Ascending aorta (tissue), 2 donors: ENCODE measurements at regions of chr5 and their contacts with region 1.

Region 1: GRCh38 chr5:142012792-142013388 is at the start of gene GNPDA1:
- DNase-seq: peak; percentile 51 to 92
- H3K4me3 ChIP-seq: peak within 1 kb of the TSS; percentile 68 to 92
- H3K27ac ChIP-seq: peak within 1 kb of the TSS; percentile 83 to 84
- H3K4me1 ChIP-seq: peaks cover 2 to 16% of the 10 kb centered on the region in 2 donors
- H3K27me3 ChIP-seq: no peaks in the 10 kb centered on the region
- CTCF ChIP-seq: peak in 1 of 3 experiments; percentile 52
- total RNA-seq, gene GNPDA1: 185 TPM

Region 2: GRCh38 chr5:141992349-141992963 is 20.4 kb before region 1 on chr5:
- intact Hi-C with region 1: loop called (anchors 1 kb)
- DNase-seq: peak in 1 of 2 donors; percentile 83
- H3K4me3 ChIP-seq: no peak overlapping the region
- H3K27ac ChIP-seq: no peak overlapping the region
- H3K4me1 ChIP-seq: no peaks in the 10 kb centered on the region
- H3K27me3 ChIP-seq: no peaks in the 10 kb centered on the region
- CTCF ChIP-seq: peak; percentile 54 to 80 (median 72)

Region 3: DNA sequence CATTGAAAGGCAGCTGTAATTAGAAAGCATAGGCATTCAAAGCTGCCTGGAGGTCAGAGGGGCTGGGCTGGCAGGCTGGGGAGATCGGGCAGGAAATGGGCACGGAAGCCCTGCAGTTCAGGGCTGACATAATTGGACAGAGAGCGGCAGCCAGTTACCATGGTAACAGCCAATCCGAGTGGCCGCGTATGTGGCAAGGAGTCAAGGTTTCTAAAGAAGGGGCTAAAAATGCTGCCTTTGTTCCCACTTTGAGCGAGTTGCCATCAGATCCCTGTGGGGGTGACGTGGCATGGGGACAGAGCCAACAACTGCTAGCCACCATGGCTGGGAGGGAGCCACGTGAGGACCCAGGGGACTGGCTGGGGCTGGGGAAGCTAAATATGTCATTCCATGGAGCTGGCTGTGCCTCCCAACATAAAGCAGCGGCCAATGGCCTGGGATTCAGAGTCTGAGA is 51.0 kb after region 1 on chr5:
- intact Hi-C with region 1: loop called (anchors 2 kb)
- DNase-seq: peak; percentile 91 to 98
- H3K4me3 ChIP-seq: no peak overlapping the region
- H3K27ac ChIP-seq: peak overlapping the region; percentile 74 to 88
- H3K4me1 ChIP-seq: peaks cover 8 to 28% of the 10 kb centered on the region in 2 donors
- H3K27me3 ChIP-seq: no peaks in the 10 kb centered on the region
- CTCF ChIP-seq: no peak

Region 4: GRCh38 chr5:142108432-142109330 is 95.8 kb after region 1 on chr5 and contains the start of gene NDFIP1:
- intact Hi-C with region 1: loop called (anchors 2 kb)
- DNase-seq: peak; percentile 47 to 90
- H3K4me3 ChIP-seq: peak within 1 kb of the TSS; percentile 85 to 93
- H3K27ac ChIP-seq: peak within 1 kb of the TSS; percentile 98 to 100
- H3K4me1 ChIP-seq: peaks cover 11 to 36% of the 10 kb centered on the region in 2 donors
- H3K27me3 ChIP-seq: no peaks in the 10 kb centered on the region
- CTCF ChIP-seq: peak in 2 of 3 experiments; percentile 15 to 25
- total RNA-seq, gene NDFIP1: 310 TPM

Region 5: DNA sequence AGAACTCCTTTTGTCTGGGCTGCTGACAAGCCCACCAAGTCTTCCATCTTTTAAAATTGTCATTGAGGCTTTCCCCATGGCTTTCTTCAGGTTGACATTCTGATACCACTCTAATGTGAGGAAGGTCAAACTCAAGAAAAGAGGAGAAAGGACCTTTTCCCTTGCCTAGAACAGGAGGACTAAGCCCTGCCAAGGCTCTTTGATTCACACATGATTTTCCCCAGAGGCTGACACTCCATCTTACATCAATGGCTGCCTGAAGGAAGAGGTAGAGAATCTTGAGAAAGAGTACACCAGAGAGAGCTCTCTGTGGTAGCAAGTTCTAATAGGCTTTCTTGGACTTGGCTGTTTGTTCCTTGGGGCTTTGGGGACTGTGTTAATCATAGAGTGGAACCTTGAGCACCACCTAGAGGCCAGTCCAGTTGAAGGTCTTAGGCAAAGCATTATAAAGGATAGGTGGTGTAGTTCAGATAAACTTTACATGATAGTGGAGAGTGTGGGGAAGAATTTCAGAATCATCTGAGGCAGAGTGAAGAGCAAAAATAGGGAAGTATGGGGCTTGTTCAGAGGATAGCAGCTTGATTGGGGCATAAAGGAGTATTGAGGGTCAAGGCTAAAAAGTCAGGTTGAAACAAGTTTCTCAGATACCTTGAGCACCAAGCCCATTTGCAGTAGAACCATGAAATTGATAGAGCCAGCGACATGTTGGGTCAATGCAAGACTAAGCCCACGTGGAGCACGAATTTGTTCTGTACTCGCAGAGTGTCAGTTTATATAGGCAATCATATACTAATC is 132.4 kb after region 1 on chr5:
- intact Hi-C with region 1: loop called (anchors 1 kb)
- DNase-seq: peak in 1 of 2 donors; percentile 77
- H3K4me3 ChIP-seq: no peak overlapping the region
- H3K27ac ChIP-seq: no peak overlapping the region
- H3K4me1 ChIP-seq: peaks cover 0 to 3% of the 10 kb centered on the region in 2 donors
- H3K27me3 ChIP-seq: no peaks in the 10 kb centered on the region
- CTCF ChIP-seq: peak; percentile 44 to 74 (median 59)

Region 6: DNA sequence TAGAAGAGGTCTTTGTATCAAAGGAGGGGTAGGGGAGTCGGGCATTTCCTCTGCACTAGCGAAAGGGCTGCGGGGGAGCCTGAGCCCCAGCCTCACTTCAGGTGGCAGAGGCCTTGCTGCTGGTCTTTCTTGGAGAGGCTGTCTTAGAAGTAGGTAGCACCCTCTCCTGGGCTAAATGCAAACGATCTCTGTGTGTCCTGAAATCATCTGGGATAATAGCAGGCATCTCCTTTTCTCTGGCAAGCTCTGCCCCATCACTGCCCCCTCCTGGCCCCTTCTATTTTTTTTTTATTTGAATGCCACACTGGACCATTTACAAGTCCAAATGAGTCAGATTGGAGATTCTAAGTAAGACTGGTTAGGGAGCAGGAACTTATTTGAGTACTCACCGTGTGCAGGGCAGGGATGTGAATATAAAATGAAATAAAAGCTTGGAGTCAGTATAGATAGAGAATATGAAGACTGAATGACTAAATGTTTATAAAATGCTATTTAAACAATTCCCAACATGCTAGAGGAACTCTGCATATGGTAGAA is 535.9 kb after region 1 on chr5:
- intact Hi-C with region 1: loop called (anchors 10 kb)
- DNase-seq: peak in 1 of 2 donors; percentile 79
- H3K4me3 ChIP-seq: no peak overlapping the region
- H3K27ac ChIP-seq: no peak overlapping the region
- H3K4me1 ChIP-seq: peaks cover 0 to 5% of the 10 kb centered on the region in 2 donors
- H3K27me3 ChIP-seq: no peaks in the 10 kb centered on the region
- CTCF ChIP-seq: peak; percentile 47 to 72 (median 68)

Region 7: DNA sequence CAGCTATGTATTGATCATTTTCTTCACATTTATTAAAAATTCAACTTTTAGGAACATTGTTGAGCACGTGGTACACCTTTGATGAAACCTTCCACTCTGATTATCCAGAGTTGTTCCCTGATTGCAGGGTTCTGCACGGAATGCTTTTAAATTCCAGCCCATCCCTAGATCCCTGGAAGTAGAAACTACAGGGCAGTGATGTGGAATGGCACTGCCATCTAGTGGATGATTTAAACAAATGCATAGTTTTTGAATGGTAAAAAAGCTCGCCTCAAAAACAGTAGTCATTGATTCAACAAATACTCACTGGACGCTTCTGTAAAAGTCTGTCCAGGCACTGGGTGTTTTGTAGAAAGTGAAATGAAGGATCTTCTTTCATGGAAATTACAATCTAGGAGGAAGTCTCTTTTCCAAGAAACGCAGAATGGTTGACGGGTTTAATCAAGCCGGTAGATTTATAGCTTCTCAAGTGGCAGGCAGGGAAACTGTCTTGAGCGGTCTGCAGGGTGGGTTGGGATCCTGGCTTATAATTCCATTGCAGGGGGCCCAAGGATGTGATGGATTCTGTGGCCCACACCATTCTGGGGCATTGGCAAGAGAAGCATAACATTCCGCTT is 875.7 kb after region 1 on chr5:
- intact Hi-C with region 1: loop called (anchors 10 kb)
- DNase-seq: no peak
- H3K4me3 ChIP-seq: no peak overlapping the region
- H3K27ac ChIP-seq: no peak overlapping the region
- H3K4me1 ChIP-seq: peaks cover 0 to 3% of the 10 kb centered on the region in 2 donors
- H3K27me3 ChIP-seq: no peaks in the 10 kb centered on the region
- CTCF ChIP-seq: peak; percentile 70 to 79 (median 75)